K562 (cell line): ENCODE measurements at regions of chr9 and their contacts with region 1.

Region 1: DNA sequence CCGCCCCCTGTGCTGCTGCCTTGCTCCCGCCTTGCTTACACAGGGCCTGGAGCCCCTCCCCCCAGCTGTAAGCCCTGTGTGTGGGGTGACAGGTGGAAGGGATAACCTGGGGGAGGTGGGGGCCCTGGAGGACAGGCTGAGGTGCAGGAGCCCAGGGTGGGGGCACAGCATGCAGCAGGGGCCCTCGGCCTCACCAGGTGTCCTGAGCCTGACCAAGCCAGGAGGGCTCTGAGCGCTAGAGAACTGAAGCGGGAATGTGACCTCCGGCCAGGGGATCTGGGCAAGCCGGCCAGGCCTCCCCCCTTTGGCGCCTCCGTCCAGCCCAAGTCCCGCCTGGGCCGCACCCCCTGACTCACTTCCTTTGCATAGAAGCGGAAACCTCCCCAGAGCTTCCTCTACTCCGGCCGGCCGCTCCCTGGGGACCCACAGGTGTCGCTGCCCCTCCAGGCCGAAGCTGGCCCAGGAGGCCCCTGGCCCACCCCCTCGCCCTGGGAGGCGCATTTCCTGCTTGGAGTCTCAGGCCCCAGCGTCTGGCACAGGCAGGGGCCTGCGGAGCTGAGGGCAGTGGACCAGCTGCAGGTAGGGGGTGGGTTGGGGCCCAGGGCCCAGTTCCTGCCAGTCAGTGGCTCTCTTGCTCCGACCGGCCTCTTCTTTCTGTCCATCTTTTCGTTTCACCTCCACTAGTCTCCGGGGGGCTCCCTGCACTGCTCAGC is at the start of gene TOR4A:
- DNase-seq: peak; percentile 90 to 97 (median 92)
- ATAC-seq: peak; percentile 93
- H3K4me3 ChIP-seq: peak within 1 kb of the TSS; percentile 88
- H3K27ac ChIP-seq: peak within 1 kb of the TSS; percentile 98
- H3K4me1 ChIP-seq: peaks cover 17 to 93% of the 10 kb centered on the region in 2 experiments
- H3K27me3 ChIP-seq: no peaks in the 10 kb centered on the region
- CTCF ChIP-seq: peak; percentile 63 to 81 (median 74)
- EP300 ChIP-seq: peak; percentile 47; the same call in 1 of the 2 replicates
- POLR2A ChIP-seq: peak; percentile 85
- RAD21 ChIP-seq: peak; percentile 33 to 58
- polyA plus RNA-seq, gene TOR4A: 3.9 to 7.0 TPM

Region 2: DNA sequence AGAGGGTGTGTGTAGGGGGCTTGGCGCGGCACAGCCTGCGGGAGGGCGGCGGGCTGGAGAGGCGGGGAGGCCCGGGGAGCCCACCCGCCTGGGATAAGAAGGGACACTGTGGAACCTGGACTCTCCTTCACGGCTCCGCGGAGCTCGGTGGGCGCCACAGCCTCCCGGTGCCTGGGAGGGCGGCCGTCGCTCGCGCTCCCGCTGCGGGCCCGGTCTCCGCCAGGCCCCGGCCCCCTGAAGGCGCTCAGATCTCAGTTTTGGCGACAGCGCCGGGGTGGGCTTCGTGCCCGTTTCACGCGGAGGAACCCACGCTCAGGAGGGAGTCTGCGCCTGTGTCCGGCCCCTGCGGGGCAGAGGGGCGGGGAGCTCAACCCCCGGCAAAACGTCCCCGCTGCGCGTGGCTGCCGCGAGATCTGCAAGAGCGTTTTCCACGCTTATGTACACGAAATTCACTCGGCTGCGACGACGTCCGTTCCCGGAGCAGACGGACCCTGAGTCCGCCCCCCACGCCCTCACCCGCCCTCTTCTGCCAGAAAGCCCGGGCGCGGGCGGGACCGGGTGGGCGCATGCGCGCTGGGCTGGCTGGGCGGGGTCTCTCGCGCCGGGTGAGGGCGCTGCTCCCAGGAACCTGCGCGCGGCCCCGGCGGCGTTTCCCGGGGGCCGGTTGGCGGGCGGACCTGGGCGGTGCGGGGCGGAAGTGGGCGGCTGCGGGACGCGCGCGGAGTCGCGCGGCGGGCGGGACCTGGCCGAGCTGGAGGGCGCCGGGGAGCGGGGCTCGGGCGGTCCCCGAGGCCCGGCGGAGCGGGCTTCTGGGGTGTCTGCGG is 22.6 kb before region 1 on chr9 and contains the start of gene NELFB:
- CTCF ChIA-PET with region 1: no interaction called
- POLR2A ChIA-PET with region 1: interaction called, 3 read pairs
- in situ Hi-C with region 1: no loop called
- intact Hi-C with region 1: loop called (anchors 2 kb)
- DNase-seq: peak; percentile 94 to 99 (median 98)
- ATAC-seq: peak; percentile 82
- H3K4me3 ChIP-seq: peak within 1 kb of the TSS; percentile 100
- H3K27ac ChIP-seq: peak within 1 kb of the TSS; percentile 84
- H3K4me1 ChIP-seq: peaks cover 13 to 68% of the 10 kb centered on the region in 2 experiments
- H3K27me3 ChIP-seq: no peaks in the 10 kb centered on the region
- CTCF ChIP-seq: 0 out of 6 replicates have a peak, but pooled peaks of 1 of the 3 experiments have one; percentile 7
- EP300 ChIP-seq: no peak
- POLR2A ChIP-seq: peak; percentile 85
- RAD21 ChIP-seq: no peak
- polyA plus RNA-seq, gene NELFB: 0.24 to 0.49 TPM